ENCODE measurements at regions of chr4 and their contacts with region 1.

Region 1: GRCh38 chr4:153403726-153404125 is 59.2 kb downstream of the MND1 start:
- DNase-seq: no peak
- ATAC-seq: no peak
- H3K4me3 ChIP-seq: no peak overlapping the region
- H3K27ac ChIP-seq: no peak overlapping the region
- H3K4me1 ChIP-seq: no peaks in the 10 kb centered on the region
- H3K27me3 ChIP-seq: no peaks in the 10 kb centered on the region
- CTCF ChIP-seq: no peak

Region 2: DNA sequence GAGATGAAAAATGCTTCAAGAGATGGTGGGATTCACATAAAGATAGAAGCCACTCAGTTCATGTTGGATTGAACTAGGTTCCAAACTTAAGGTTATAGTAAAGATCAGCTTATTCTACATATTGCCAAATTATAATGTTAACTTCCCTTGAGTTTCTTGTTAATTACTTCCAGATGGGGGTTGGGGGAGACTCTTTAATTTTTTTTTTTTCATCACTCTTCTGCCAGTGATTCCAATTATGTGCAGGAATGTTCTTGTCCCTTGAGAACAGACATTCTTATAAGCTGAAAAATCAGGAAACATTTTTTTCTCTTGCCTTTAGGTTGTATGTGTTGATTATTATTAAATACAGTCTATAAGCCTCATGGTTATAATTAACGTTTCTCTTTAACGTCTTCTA is 29.3 kb before region 1 on chr4:
- CTCF ChIA-PET with region 1: no interaction called
- POLR2A ChIA-PET with region 1: interaction called, 21 read pairs
- in situ Hi-C with region 1: no loop called
- intact Hi-C with region 1: no loop called
- DNase-seq: no peak
- ATAC-seq: no peak
- H3K4me3 ChIP-seq: no peak overlapping the region
- H3K27ac ChIP-seq: no peak overlapping the region
- H3K4me1 ChIP-seq: no peaks in the 10 kb centered on the region
- H3K27me3 ChIP-seq: no peaks in the 10 kb centered on the region
- CTCF ChIP-seq: no peak

Region 3: GRCh38 chr4:153418558-153418957 is 14.8 kb after region 1 on chr4:
- CTCF ChIA-PET with region 1: no interaction called
- POLR2A ChIA-PET with region 1: interaction called, 10 read pairs
- in situ Hi-C with region 1: no loop called
- intact Hi-C with region 1: no loop called
- DNase-seq: no peak
- ATAC-seq: no peak
- H3K4me3 ChIP-seq: no peak overlapping the region
- H3K27ac ChIP-seq: no peak overlapping the region
- H3K4me1 ChIP-seq: no peaks in the 10 kb centered on the region
- H3K27me3 ChIP-seq: no peaks in the 10 kb centered on the region
- CTCF ChIP-seq: no peak

Measured in Panc1 (cell line).